Caco-2 (cell line): ENCODE measurements at regions of chr14 and their contacts with region 1.

Region 1: DNA sequence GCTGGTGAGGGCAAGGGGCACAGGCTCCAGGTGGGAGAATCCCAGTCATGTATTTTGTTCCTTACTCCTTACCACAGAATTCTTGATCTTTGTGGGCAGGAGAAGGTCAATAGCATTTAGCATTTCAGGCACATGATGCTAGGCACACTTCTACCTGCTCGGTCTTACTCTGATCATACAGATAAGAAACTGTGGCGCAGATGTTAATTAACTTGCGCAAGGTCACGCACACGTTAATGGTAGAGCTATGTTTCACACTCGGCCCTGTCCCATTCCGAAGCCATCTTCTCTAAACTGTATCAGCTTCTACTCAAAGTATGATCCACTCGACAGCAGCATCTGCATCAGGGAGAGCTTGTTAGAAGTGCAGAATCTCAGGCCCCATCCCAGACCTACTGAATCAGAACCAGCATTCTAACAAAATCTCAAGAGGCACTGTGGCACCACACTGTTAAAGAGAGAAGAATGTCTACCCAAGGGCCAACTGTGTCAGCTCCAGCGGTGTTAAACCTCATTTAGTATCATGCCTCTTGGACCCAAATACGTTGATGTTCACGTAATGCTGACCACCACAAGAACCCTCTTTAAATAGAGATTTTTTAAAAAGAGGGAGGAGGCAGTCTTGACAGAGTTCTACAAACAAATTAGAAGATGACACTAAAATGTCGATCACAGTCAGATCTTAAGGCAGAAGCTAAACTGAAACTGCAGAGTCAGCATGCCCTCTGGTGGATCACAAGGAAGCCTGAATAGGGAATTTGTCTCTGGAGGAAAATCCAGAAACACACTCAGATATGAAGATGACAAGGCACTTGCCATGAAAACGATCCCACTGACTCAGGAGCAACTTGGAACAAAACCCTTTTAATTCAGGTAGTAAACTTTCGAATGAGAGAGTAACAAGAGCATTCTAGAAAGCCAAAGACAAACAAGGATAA is 7.3 kb downstream of the STXBP6 start:
- DNase-seq: peak; percentile 55 to 56
- H3K4me3 ChIP-seq: no peak overlapping the region
- H3K4me3 Mint-ChIP-seq: no peak overlapping the region
- H3K27ac Mint-ChIP-seq: peak overlapping the region; percentile 44
- H3K4me1 ChIP-seq: no peaks in the 10 kb centered on the region; the same call in 1 of the 2 replicates
- H3K4me1 Mint-ChIP-seq: peaks cover 22% of the 10 kb centered on the region
- H3K27me3 ChIP-seq: no peaks in the 10 kb centered on the region
- H3K27me3 Mint-ChIP-seq: no peaks in the 10 kb centered on the region
- CTCF ChIP-seq: peak; percentile 54 to 79

Region 2: DNA sequence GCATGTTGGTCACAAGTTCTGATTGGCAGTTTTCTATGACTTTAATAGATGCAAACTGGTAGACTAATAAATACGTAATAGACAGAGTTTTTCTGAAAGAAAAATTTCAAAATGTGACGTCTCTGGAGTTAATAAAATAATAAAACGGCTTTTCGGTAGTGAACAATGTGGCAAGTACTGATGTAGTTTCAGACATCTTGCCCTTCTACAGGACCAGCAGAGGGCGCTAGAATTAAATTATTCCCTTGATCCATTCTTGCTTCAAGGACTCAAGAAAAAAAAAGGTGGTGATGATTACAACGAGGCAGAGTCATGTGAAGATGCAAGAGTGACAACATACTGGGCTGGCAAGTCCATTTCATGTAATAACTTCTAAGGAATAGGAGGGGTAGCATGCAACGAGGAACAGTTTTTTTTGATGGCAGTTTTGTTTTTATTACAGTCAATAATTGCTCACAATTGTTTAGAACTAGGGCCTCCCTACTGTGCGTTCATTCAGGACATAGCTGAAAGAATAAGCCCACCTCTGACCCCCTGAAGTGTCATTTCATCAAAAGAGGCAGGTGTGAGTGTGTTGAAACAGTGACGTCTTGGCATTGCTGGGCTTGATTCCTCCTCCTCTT is 307.6 kb before region 1 on chr14:
- CTCF ChIA-PET with region 1: no interaction called
- POLR2A ChIA-PET with region 1: no interaction called
- intact Hi-C with region 1: loop called (anchors 1 kb)
- DNase-seq: peak; percentile 42 to 66
- H3K4me3 ChIP-seq: no peak overlapping the region
- H3K4me3 Mint-ChIP-seq: no peak overlapping the region
- H3K27ac Mint-ChIP-seq: no peak overlapping the region
- H3K4me1 ChIP-seq: no peaks in the 10 kb centered on the region
- H3K4me1 Mint-ChIP-seq: no peaks in the 10 kb centered on the region
- H3K27me3 ChIP-seq: no peaks in the 10 kb centered on the region
- H3K27me3 Mint-ChIP-seq: no peaks in the 10 kb centered on the region
- CTCF ChIP-seq: peak; percentile 69 to 70

Region 3: GRCh38 chr14:24761141-24761540 is 281.5 kb before region 1 on chr14:
- CTCF ChIA-PET with region 1: interaction called, 10 read pairs
- POLR2A ChIA-PET with region 1: no interaction called
- intact Hi-C with region 1: loop called (anchors 1 kb)
- DNase-seq: peak in 1 of 2 experiments; percentile 20
- H3K4me3 ChIP-seq: no peak overlapping the region
- H3K4me3 Mint-ChIP-seq: no peak overlapping the region
- H3K27ac Mint-ChIP-seq: no peak overlapping the region
- H3K4me1 ChIP-seq: no peaks in the 10 kb centered on the region
- H3K4me1 Mint-ChIP-seq: no peaks in the 10 kb centered on the region
- H3K27me3 ChIP-seq: no peaks in the 10 kb centered on the region
- H3K27me3 Mint-ChIP-seq: peaks cover 8% of the 10 kb centered on the region
- CTCF ChIP-seq: peak in 1 of 2 experiments; percentile 47

Region 4: DNA sequence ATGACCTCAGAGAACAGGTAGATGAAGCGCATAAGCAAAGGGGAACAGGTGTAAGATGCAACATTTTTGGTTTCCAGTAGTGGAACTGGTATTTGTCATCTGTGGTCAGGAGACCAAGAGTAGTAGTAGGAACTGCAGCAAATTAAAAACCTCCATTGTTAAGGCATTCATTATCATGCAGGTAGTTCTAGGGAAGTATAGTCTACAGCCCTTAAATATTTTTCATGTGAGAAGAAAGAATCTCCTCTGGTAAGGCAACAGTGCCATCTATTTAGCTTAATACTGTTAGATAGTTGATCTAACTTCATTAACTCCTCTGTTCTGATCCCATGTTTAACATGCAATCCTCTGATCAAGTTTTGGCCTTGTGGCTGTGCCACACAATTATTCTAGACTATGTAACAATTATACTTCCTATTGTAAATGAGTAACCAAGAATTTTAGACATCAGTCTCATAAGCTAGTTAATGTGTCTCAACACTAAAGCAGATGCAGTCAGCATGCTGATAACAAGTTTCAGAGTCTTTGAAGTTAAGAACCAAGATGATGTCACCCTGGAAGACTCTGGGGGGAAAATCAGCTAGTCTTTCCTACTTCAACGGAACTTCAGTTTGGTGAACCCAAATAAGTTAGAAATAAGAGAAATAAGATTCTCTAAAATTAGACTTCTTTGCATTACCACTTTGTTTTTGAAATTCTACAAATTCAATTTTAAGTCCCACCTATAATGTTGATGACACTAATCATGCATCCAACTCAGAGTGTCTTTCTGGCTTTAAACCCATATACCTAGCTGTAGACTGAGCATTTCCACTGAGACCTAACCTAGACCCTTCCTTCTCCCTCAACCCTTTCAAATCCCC is 63.5 kb before region 1 on chr14:
- CTCF ChIA-PET with region 1: no interaction called
- POLR2A ChIA-PET with region 1: no interaction called
- intact Hi-C with region 1: no loop called
- DNase-seq: peak; percentile 38 to 61
- H3K4me3 ChIP-seq: no peak overlapping the region
- H3K4me3 Mint-ChIP-seq: peak overlapping the region; percentile 54
- H3K27ac Mint-ChIP-seq: peak overlapping the region; percentile 78
- H3K4me1 ChIP-seq: peaks cover 74% of the 10 kb centered on the region
- H3K4me1 Mint-ChIP-seq: peaks cover 55% of the 10 kb centered on the region
- H3K27me3 ChIP-seq: no peaks in the 10 kb centered on the region
- H3K27me3 Mint-ChIP-seq: no peaks in the 10 kb centered on the region
- CTCF ChIP-seq: no peak

Region 5: DNA sequence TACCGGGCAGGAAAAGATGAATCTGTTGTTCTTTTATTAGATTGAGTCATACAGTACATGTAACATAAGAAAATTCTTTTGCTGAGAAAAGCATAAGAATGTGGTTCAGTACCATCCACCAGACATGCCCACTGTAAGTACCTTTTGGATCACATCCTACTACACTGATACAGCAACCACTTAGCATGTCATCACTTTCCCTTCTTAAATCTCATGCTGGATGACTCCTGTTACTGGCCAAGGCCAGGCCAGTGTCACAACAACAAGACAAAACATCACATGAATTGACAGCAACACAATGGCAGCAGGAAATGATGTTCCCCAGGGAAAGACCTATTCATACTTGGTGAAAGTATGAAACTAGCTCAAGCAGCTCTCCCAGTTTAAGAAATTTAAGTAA is 39.1 kb before region 1 on chr14:
- CTCF ChIA-PET with region 1: no interaction called
- POLR2A ChIA-PET with region 1: no interaction called
- intact Hi-C with region 1: no loop called
- DNase-seq: no peak
- H3K4me3 ChIP-seq: no peak overlapping the region
- H3K4me3 Mint-ChIP-seq: no peak overlapping the region
- H3K27ac Mint-ChIP-seq: peak overlapping the region; percentile 48
- H3K4me1 ChIP-seq: peaks cover 67% of the 10 kb centered on the region
- H3K4me1 Mint-ChIP-seq: peaks cover 40% of the 10 kb centered on the region
- H3K27me3 ChIP-seq: no peaks in the 10 kb centered on the region
- H3K27me3 Mint-ChIP-seq: no peaks in the 10 kb centered on the region
- CTCF ChIP-seq: no peak